ENCODE measurements at regions of chr4 and their contacts with region 1.

Region 1: GRCh38 chr4:15253201-15253748 is 174.6 kb upstream of the C1QTNF7 start:
- DNase-seq: no peak
- H3K4me3 ChIP-seq: no peak overlapping the region
- H3K27ac ChIP-seq: no peak overlapping the region
- H3K4me1 ChIP-seq: no peaks in the 10 kb centered on the region
- H3K27me3 ChIP-seq: no peaks in the 10 kb centered on the region
- CTCF ChIP-seq: no peak
- EP300 ChIP-seq: no peak
- POLR2A ChIP-seq: no peak

Region 2: DNA sequence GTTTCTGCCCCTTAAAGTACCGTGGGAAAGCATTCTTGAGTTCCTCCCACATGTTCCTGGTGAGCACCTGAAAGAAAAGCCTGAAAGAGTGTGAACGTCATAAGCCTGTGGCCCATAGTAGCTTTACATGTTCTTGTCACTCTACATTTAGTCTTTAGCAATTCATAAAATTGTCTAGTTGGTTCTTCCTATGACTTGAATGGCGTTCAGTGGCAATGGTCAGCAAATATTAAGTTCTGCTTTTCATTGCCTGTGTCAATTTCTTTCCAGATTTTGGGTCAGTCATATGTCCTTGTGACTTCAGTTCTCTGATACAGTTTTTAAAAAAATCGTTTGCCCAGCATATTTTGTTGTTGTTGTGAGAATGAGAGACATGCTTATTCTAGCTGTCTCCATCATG is 975.8 kb before region 1 on chr4:
- in situ Hi-C with region 1: no loop called
- intact Hi-C with region 1: no loop called
- DNase-seq: no peak
- H3K4me3 ChIP-seq: no peak overlapping the region
- H3K27ac ChIP-seq: no peak overlapping the region
- H3K4me1 ChIP-seq: no peaks in the 10 kb centered on the region
- H3K27me3 ChIP-seq: no peaks in the 10 kb centered on the region
- CTCF ChIP-seq: no peak
- EP300 ChIP-seq: no peak
- POLR2A ChIP-seq: no peak

Region 3: GRCh38 chr4:14701896-14702295 is 551.4 kb before region 1 on chr4:
- in situ Hi-C with region 1: no loop called
- intact Hi-C with region 1: no loop called
- DNase-seq: no peak
- H3K4me3 ChIP-seq: no peak overlapping the region
- H3K27ac ChIP-seq: no peak overlapping the region
- H3K4me1 ChIP-seq: no peaks in the 10 kb centered on the region
- H3K27me3 ChIP-seq: no peaks in the 10 kb centered on the region
- CTCF ChIP-seq: no peak
- EP300 ChIP-seq: no peak
- POLR2A ChIP-seq: no peak

Region 4: DNA sequence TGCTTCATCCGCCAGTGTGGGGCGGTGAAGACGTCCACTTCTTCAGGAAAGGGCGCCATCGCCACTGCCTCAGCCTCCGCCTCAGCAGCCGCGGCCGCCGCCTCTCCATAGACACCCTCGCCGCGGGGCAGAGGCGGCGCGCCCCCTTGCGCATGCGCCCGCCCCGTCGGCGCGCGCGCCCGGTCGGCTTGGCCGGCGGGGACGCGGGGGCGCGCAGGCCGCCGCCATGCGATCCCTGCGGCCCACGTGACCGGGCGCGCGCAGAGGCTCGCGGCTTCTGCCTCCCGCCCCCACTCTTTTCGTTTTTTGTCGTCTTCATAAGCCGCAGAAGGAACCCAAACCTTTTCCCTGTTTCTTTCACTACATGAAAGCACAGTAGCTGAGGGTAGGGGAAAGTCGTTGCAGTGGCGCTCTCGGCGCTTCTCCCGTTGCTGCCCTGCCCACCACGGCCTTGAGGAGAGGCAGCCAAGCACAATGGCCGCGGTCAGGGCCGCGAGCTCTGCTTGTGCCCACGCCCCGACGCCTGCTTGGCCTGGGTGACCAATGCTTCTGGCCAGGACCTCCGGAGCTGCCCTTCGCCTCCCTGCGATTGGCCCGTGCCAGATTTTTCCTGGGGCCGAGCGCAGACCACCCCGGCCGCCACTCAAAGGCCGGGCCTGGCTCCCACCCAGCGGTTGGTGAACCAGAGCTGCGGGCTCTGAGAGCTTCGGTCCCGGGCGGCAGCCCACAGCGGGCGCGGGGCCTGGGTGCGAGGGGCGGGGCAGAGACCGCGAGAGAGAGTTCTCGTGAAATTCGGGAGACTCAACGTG is 402.2 kb after region 1 on chr4 and contains the start of gene FBXL5:
- in situ Hi-C with region 1: no loop called
- intact Hi-C with region 1: loop called (anchors 5 kb)
- DNase-seq: peak; percentile 83
- H3K4me3 ChIP-seq: peak within 1 kb of the TSS; percentile 77 to 94 (median 82)
- H3K27ac ChIP-seq: peak within 1 kb of the TSS; percentile 97 to 100 (median 98)
- H3K4me1 ChIP-seq: peaks cover 17 to 43% (median 40%) of the 10 kb centered on the region in 4 donors
- H3K27me3 ChIP-seq: no peaks in the 10 kb centered on the region
- CTCF ChIP-seq: no peak
- EP300 ChIP-seq: no peak
- POLR2A ChIP-seq: peak; percentile 84
- total RNA-seq, gene FBXL5: 31.8 to 141 (median 77.5) TPM